Naive thymus-derived CD8-positive, alpha-beta T cell (primary cell): ENCODE measurements at regions of chr12 and their contacts with region 1.

Region 1: DNA sequence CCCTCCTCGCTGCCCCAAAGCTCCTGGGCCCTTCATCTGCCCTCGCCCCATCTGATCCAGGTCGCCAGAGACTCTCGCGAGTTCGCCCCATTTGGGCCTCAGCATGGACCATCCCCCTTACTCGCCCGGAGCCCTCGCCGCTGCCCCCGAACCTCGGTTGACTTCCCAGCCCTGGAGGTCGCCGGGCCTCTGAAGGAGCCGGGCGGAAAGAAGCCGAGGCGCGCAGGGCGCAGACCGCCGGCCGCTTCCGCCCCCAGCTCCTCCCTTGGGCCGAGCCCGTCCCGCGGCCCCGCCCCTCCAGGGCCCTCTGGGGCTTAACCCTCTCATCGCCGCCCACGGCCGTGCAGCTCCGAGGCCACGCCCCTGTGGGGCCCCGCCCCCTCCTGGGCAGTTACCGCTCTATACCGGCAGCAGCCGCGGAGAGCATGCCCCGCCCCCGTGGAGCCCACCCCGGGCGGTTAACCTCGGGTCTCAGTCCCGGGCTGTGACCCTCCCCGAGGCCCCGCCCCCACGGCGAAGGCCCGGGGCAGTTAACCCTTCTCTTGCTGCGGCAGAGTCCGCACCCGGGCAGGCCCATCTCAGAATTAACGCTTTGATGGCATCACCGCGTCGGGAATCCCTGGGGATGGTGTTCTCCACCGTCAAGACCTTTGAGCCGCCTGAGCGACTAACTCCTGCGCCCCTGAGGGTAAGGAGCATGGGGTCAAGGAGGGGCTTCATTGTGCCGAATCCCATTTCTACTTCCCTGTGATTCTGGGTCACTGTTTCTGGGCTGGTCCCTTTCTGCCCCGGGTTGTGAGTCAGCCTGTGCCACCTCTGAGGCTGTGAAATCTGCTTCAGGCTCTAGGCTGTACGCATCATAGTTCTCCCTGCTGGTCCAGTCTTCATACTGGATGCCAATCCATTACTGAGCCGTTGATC is at the start of gene SPSB2:
- DNase-seq: peak; percentile 95 to 100 (median 98)
- ATAC-seq: peak; percentile 77 to 90
- H3K4me3 Mint-ChIP-seq: peak within 1 kb of the TSS; percentile 84 to 97 (median 90)
- H3K27ac Mint-ChIP-seq: peak within 1 kb of the TSS; percentile 80 to 95 (median 90)
- H3K4me1 Mint-ChIP-seq: peaks cover 37 to 53% (median 49%) of the 10 kb centered on the region in 4 donors
- H3K27me3 Mint-ChIP-seq: no peaks in the 10 kb centered on the region
- polyA plus RNA-seq, gene SPSB2: 10.1 to 10.6 (median 10.2) TPM

Region 2: GRCh38 chr12:6827436-6827911 is 45.9 kb before region 1 on chr12:
- POLR2A ChIA-PET with region 1: interaction called, 10 read pairs
- DNase-seq: peak in 3 of 10 donors; percentile 24 to 67 (median 34)
- ATAC-seq: no peak
- H3K4me3 Mint-ChIP-seq: peak overlapping the region; percentile 25 to 92 (median 68)
- H3K27ac Mint-ChIP-seq: peak overlapping the region in 6 of 10 donors; percentile 6 to 89 (median 46)
- H3K4me1 Mint-ChIP-seq: peaks cover 15 to 36% (median 19%) of the 10 kb centered on the region in 4 donors
- H3K27me3 Mint-ChIP-seq: peaks cover 15 to 60% (median 46%) of the 10 kb centered on the region in 5 donors

Region 3: DNA sequence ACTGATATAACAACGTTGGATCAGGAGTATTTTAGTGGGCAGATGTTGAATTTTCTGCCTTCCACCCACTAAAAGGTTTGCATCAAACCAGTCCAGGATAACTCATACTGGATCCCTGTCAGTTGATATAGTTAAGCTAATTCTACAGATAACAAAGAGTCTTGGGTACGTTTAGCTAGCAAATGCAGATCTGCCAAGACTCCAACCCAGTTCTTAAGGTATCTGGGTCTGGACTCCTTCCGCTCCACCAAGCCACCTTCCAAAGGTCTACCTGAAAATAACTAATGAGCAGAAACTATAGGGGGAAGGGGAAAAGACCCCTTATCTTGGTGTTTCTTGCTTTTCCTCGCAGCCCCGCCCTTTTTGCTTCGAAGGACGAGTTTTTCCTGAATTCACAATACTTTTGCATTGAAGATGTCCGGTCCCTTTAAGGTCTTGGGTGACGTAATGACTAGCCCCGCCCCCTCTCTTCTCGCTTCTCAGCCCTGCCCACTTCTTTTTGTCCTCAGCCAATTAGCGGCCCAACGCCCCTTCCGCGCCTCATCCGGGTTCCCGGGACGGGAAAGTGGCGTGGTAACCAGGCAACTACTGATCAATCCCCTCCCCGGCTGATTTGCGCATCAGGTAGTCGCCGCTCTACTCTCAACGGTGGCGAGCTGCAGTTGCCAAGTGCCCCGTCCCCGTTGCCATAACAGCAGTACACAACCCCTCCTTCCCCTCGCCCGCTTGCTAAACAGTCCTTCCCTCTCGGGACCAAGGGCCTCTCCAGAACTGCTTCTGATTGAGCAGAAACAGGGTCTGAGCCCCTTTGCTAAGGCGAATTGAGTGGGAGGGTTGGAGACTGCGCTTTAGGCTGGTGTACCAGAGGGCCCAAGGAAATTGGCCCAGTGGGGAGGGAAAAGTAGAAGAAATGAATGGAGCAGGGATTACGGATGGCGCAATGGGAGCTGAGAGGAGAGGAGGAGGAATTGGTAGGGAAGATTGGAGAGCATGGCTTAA is 31.2 kb after region 1 on chr12 and contains the start of gene LRRC23:
- POLR2A ChIA-PET with region 1: interaction called, 18 read pairs
- DNase-seq: peak; percentile 89 to 99 (median 97)
- ATAC-seq: peak; percentile 93 to 94
- H3K4me3 Mint-ChIP-seq: peak within 1 kb of the TSS in 2 of 10 donors; percentile 9 to 45
- H3K27ac Mint-ChIP-seq: no peak within 1 kb of the TSS
- H3K4me1 Mint-ChIP-seq: peaks cover under 1 to 5% (median 4%) of the 10 kb centered on the region in 4 donors
- H3K27me3 Mint-ChIP-seq: no peaks in the 10 kb centered on the region
- polyA plus RNA-seq, gene LRRC23: 4.7 to 9.9 (median 8.8) TPM

Region 4: DNA sequence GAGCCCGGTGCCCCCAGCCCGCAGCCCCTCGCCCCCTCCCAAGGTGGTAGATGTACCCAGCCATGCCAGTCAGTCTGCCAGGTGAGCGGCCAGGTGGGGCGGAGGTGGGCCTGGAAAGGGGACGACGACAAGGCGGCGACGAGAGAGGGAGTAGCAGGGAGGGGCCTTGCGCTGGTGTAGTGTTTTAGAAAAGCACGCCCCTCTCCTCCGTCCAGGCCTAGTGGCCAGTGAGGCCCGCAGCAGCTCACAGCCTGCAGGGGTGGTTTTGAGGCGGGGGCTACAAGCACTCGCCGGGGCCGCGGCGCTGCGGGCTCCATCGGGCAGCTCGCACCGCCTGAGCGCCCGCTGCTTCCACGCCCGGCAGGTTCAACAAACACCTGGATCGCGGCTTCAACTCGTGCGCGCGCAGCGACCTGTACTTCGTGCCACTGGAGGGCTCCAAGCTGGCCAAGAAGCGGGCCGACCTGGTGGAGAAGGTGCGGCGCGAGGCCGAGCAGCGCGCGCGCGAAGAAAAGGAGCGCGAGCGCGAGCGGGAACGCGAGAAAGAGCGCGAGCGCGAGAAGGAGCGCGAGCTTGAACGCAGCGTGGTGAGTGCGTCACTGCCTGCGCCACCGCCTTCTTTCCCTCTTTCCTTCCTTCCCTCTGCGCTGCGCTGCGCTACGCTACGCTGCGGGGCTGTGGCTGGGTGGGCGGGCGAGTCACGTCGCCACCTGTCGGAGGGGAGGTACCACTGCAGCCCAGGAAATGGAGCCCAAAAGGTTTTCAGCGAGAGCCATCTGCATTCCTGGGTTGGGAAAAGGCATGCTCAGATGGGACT is 64.3 kb after region 1 on chr12:
- POLR2A ChIA-PET with region 1: interaction called, 48 read pairs
- DNase-seq: peak; percentile 87 to 96 (median 92)
- ATAC-seq: peak; percentile 85 to 93
- H3K4me3 Mint-ChIP-seq: peak overlapping the region; percentile 72 to 91 (median 86)
- H3K27ac Mint-ChIP-seq: peak overlapping the region; percentile 89 to 98 (median 98)
- H3K4me1 Mint-ChIP-seq: peaks cover 29 to 53% (median 48%) of the 10 kb centered on the region in 4 donors
- H3K27me3 Mint-ChIP-seq: no peaks in the 10 kb centered on the region

Region 5: GRCh38 chr12:6965026-6965661 is 91.8 kb after region 1 on chr12:
- POLR2A ChIA-PET with region 1: interaction called, 43 read pairs
- DNase-seq: peak; percentile 77 to 93 (median 86)
- ATAC-seq: peak; percentile 46 to 61
- H3K4me3 Mint-ChIP-seq: peak overlapping the region in 4 of 10 donors; percentile 15 to 48 (median 30)
- H3K27ac Mint-ChIP-seq: peak overlapping the region; percentile 79 to 95 (median 90)
- H3K4me1 Mint-ChIP-seq: peaks cover 31 to 64% (median 62%) of the 10 kb centered on the region in 4 donors
- H3K27me3 Mint-ChIP-seq: no peaks in the 10 kb centered on the region